ENCODE measurements at regions of chr6 and their contacts with region 1.

Region 1: DNA sequence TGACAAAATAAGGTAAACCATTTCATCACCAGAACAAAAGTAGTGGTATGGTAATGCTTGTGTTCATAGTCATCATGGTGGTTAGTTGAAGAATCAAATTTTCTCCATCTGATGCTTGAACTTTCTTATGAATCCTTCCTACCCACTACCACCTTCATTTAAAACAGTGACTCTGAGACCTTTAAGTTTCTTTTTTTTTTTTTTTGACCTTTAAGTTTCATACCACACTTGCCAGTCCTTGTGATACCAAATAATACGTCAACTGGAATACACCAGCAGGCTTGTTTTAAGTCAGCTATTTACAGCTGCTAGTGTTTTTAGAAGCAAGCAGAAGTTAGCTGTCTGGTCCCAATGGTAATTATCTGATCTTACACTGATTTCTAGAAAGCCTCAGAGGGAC is 413.4 kb upstream of the SOX4 start:
- DNase-seq: no peak
- H3K4me3 Mint-ChIP-seq: no peak overlapping the region
- H3K27ac Mint-ChIP-seq: peak overlapping the region; percentile 53
- H3K4me1 Mint-ChIP-seq: peaks cover 23% of the 10 kb centered on the region
- H3K27me3 Mint-ChIP-seq: no peaks in the 10 kb centered on the region

Region 2: GRCh38 chr6:19945843-19946358 is 1234.3 kb before region 1 on chr6:
- intact Hi-C with region 1: no loop called
- DNase-seq: no peak
- H3K4me3 Mint-ChIP-seq: no peak overlapping the region
- H3K27ac Mint-ChIP-seq: no peak overlapping the region
- H3K4me1 Mint-ChIP-seq: no peaks in the 10 kb centered on the region
- H3K27me3 Mint-ChIP-seq: no peaks in the 10 kb centered on the region

Region 3: DNA sequence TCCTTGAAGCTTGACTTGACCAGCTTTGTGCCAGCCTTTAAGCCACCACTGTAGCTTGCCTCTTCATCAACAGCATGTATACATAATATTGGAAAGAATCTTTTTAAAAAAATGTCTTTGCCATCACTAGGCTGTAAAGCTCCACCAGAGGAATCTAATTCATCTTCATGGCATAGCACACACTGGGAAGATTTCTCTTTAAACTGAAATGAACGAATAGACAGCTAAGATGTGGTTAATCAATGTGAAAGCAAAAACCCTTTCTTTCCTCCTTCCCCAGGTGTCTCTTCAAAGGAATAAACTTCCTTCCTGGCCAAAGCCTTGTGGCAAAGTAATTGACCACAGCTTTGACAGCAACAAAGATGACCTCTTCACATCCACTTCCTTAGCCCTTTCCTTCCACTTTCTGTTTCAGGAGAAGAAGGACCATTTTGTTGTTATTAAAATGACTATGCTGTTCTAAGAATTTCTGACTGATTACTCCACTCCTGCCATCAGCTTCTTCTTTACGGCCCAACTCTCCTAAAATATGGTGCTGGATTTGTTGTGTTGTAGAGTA is 15.3 kb before region 1 on chr6:
- intact Hi-C with region 1: loop called (anchors 2 kb)
- DNase-seq: no peak
- H3K4me3 Mint-ChIP-seq: no peak overlapping the region
- H3K27ac Mint-ChIP-seq: peak overlapping the region; percentile 44
- H3K4me1 Mint-ChIP-seq: peaks cover 34% of the 10 kb centered on the region
- H3K27me3 Mint-ChIP-seq: no peaks in the 10 kb centered on the region

Region 4: DNA sequence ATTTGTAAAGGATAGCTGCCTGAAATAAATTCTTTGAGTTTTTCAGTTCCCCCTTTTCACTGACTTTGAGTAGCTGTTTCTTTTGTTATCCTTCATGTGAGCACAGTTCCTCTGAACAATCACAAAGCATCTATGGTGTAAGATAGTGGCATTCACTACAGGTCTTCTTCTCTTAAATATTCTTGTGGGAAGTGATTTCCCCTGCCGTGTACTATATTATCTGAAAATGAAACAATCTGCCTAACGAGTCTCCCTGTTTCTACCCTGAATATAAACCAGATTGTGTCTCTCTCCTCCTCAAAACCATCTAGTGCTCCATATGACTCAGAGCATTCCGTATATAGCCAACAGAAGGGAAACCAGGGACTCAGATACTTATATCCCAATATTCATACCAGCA is 33.3 kb after region 1 on chr6:
- intact Hi-C with region 1: loop called (anchors 2 kb)
- DNase-seq: no peak
- H3K4me3 Mint-ChIP-seq: no peak overlapping the region
- H3K27ac Mint-ChIP-seq: no peak overlapping the region
- H3K4me1 Mint-ChIP-seq: peaks cover 3% of the 10 kb centered on the region
- H3K27me3 Mint-ChIP-seq: no peaks in the 10 kb centered on the region

Region 5: GRCh38 chr6:21263531-21264287 is 83.6 kb after region 1 on chr6:
- intact Hi-C with region 1: loop called (anchors 1 kb)
- DNase-seq: no peak
- H3K4me3 Mint-ChIP-seq: no peak overlapping the region
- H3K27ac Mint-ChIP-seq: no peak overlapping the region
- H3K4me1 Mint-ChIP-seq: peaks cover 26% of the 10 kb centered on the region
- H3K27me3 Mint-ChIP-seq: no peaks in the 10 kb centered on the region

Measured in activated T-helper 2 cell treated with anti-CD3 and anti-CD28 coated beads, Interferon-gamma antibody, Interleukin-2, Interleukin-4, amounts not matched to agents 10 μg/mL and 5 μg/mL and 100 μg/mL, durations not matched to agents 14 hours and 24 hours and 36 hours (primary cell).